WTC11 (cell line): ENCODE measurements at regions of chr15 and their contacts with region 1.

Region 1: GRCh38 chr15:49876401-49877038 is 242.5 kb downstream of the ATP8B4 start:
- DNase-seq: peak; percentile 53
- ATAC-seq: peak; percentile 96
- H3K4me3 Mint-ChIP-seq: no peak overlapping the region
- H3K27ac Mint-ChIP-seq: no peak overlapping the region
- H3K4me1 Mint-ChIP-seq: peaks cover 12% of the 10 kb centered on the region
- H3K27me3 Mint-ChIP-seq: no peaks in the 10 kb centered on the region
- CTCF ChIP-seq: peak; percentile 56; the same call in 1 of the 2 replicates

Region 2: GRCh38 chr15:49855917-49856637 is 20.4 kb before region 1 on chr15:
- CTCF ChIA-PET with region 1: interaction called, 10 read pairs
- POLR2A ChIA-PET with region 1: no interaction called
- DNase-seq: no peak
- ATAC-seq: no peak
- H3K4me3 Mint-ChIP-seq: no peak overlapping the region
- H3K27ac Mint-ChIP-seq: no peak overlapping the region
- H3K4me1 Mint-ChIP-seq: no peaks in the 10 kb centered on the region
- H3K27me3 Mint-ChIP-seq: no peaks in the 10 kb centered on the region
- CTCF ChIP-seq: no peak

Region 3: DNA sequence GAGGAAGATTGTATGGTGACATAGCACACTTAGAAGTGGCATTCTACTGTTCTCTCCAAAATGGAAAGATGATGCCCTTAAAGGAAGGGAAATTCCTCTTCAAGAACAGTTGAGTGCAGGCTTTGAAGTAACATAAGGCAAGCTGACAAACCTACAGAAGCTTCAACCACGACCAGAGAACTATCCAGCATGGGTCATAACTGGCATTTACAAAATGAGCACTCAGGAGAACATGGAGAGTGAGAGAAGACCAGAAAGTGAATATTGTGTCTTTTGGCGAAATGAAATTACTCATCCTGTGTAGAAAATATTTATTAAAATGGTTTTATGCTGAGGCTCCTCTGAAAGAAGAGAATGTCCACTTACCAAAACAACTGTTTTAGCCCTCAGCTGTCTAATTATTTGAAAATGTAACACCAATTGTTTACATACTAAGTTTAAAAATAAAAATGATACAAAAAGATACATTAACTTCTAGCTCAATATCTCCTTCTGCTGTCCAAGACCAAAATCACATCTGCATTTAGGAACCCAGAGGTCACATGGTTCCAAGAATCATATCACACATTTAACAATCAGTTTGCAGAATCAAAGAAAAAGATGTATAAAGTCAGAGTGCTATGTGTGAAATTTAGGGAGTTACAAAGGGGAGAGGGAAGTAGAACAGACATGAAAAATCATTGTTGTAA is 25.6 kb after region 1 on chr15:
- CTCF ChIA-PET with region 1: interaction called, 11 read pairs
- POLR2A ChIA-PET with region 1: no interaction called
- DNase-seq: no peak
- ATAC-seq: no peak
- H3K4me3 Mint-ChIP-seq: no peak overlapping the region
- H3K27ac Mint-ChIP-seq: no peak overlapping the region
- H3K4me1 Mint-ChIP-seq: peaks cover 15% of the 10 kb centered on the region
- H3K27me3 Mint-ChIP-seq: no peaks in the 10 kb centered on the region
- CTCF ChIP-seq: no peak

Region 4: GRCh38 chr15:50009634-50010033 is 133.1 kb after region 1 on chr15:
- CTCF ChIA-PET with region 1: interaction called, 114 read pairs
- POLR2A ChIA-PET with region 1: interaction called, 9 read pairs
- DNase-seq: no peak
- ATAC-seq: no peak
- H3K4me3 Mint-ChIP-seq: no peak overlapping the region
- H3K27ac Mint-ChIP-seq: no peak overlapping the region
- H3K4me1 Mint-ChIP-seq: peaks cover 8% of the 10 kb centered on the region
- H3K27me3 Mint-ChIP-seq: no peaks in the 10 kb centered on the region
- CTCF ChIP-seq: no peak

Region 5: DNA sequence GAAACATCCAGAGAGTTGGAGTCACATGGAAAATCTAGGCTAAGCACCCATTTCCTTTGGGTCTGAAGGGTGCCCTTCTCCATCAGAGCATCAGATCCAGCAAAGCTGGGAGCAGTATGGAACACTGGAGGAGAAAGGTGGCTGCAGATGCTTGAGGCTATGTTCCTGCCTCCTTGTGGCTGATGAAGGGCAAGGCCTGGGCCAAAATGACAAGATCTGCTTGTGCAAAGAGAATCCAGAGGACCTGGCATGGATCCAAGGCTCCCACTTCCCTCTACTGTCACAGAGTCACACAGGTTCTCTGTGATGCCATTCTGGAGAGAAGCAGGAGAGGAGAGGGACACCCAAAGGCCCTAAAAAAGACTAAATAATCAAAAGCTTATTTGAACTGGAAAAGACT is 251.7 kb after region 1 on chr15:
- CTCF ChIA-PET with region 1: interaction called, 10 read pairs
- POLR2A ChIA-PET with region 1: no interaction called
- DNase-seq: peak; percentile 14
- ATAC-seq: peak; percentile 69
- H3K4me3 Mint-ChIP-seq: no peak overlapping the region
- H3K27ac Mint-ChIP-seq: no peak overlapping the region; the same call in 1 of the 2 replicates
- H3K4me1 Mint-ChIP-seq: peaks cover 17% of the 10 kb centered on the region
- H3K27me3 Mint-ChIP-seq: no peaks in the 10 kb centered on the region
- CTCF ChIP-seq: no peak

Region 6: GRCh38 chr15:50145451-50145872 is 268.9 kb after region 1 on chr15:
- CTCF ChIA-PET with region 1: interaction called, 34 read pairs
- POLR2A ChIA-PET with region 1: no interaction called
- DNase-seq: no peak
- ATAC-seq: peak; percentile 80
- H3K4me3 Mint-ChIP-seq: no peak overlapping the region
- H3K27ac Mint-ChIP-seq: no peak overlapping the region
- H3K4me1 Mint-ChIP-seq: peaks cover 4% of the 10 kb centered on the region
- H3K27me3 Mint-ChIP-seq: no peaks in the 10 kb centered on the region
- CTCF ChIP-seq: peak; percentile 40; the same call in 1 of the 2 replicates